Colonic mucosa (tissue), 4 donors: ENCODE measurements at regions of chr3 and their contacts with region 1.

Region 1: DNA sequence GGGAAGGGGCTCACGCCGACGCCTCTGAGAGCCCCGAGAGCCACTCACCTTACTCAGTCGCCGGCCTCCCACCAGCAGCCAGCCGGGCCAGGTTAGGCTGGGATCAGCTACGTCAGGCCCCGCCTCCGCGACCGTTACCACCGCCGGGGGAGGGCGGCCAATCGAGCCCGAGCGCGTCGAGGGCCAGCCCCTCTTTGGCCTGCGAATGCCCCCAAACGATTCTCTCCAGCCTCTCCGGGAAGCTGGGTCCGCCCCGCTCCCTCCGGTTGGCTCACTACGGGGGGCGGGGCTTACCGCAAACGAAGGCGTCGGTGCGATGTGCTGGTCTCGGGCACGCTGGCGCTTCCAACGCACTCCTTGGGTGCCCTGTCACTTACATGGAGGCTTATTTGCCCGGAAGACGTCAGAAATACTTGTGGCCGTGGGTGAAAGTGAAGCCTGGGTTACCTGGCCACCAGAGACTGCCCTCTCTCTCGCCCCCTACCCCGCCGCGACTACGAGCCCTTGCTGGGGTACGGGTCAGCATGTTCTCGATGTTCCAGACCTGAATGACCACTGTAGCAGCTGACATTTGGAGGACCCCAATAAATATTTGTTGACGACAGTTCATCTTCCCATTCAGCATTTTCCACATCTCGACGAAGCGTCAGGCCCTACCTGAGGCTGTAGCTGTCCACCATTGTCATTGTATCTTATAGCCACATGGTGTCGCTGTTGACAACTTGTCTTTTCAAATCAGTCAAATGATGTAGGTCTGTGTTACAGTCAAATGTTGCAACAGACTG is at the start of gene CEP70:
- DNase-seq: peak; percentile 96
- H3K4me3 ChIP-seq: peak within 1 kb of the TSS; percentile 64
- H3K27ac ChIP-seq: peak within 1 kb of the TSS; percentile 89
- H3K4me1 ChIP-seq: peaks cover 3% of the 10 kb centered on the region
- H3K27me3 ChIP-seq: no peaks in the 10 kb centered on the region
- CTCF ChIP-seq: peak; percentile 92
- total RNA-seq, gene CEP70: 31.6 to 45.4 TPM

Region 2: GRCh38 chr3:138694287-138695007 is 100.1 kb after region 1 on chr3:
- intact Hi-C with region 1: loop called (anchors 5 kb)
- DNase-seq: no peak
- H3K4me3 ChIP-seq: no peak overlapping the region
- H3K27ac ChIP-seq: no peak overlapping the region
- H3K4me1 ChIP-seq: no peaks in the 10 kb centered on the region
- H3K27me3 ChIP-seq: no peaks in the 10 kb centered on the region
- CTCF ChIP-seq: no peak

Region 3: DNA sequence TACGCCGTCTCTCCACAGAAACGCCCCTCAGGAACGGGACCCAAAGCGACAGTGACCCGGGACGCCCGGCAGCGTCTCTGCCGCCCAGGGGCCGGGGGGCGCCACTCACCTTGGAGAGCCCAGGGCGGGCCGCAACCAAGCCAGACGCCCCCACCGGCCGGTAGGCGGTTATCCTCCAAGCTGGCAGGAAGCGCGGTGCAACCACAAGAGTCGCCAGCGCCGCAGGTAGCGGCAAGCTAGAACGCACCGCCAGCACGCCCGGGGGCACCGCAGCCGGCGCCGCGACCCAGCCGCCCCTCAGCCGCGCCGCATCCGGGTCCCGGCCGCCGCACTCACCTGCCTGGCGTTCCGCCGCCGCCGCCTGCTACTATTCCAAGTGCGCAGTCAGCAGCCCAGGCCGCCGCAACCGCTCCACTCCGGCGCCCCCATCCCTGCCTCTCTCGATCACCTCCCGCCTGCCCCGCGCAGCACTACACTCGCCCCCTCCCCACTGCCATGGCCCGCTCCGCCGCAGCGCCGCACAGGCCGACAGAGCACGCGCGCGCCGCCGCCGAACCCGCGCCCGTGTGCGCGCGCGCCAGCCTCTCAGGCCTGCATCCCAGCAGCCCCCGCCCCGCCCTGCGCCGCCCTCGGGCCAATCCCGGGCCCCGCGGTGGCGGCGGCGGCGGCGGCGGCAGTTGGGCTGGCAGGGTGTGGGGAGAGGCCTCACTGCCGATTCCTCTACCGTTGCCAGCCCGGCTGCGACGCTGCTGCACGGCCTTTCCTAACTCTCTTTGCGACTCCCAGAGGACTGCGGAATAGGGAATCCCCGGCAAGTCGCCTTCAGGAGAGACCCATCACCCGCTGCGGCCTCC is 240.2 kb after region 1 on chr3 and contains the start of gene PIK3CB:
- intact Hi-C with region 1: loop called (anchors 10 kb)
- DNase-seq: peak; percentile 93
- H3K4me3 ChIP-seq: peak within 1 kb of the TSS; percentile 97
- H3K27ac ChIP-seq: peak within 1 kb of the TSS; percentile 93
- H3K4me1 ChIP-seq: no peaks in the 10 kb centered on the region
- H3K27me3 ChIP-seq: no peaks in the 10 kb centered on the region
- CTCF ChIP-seq: peak; percentile 21
- total RNA-seq, gene PIK3CB: 43.4 to 51.5 TPM

Region 4: DNA sequence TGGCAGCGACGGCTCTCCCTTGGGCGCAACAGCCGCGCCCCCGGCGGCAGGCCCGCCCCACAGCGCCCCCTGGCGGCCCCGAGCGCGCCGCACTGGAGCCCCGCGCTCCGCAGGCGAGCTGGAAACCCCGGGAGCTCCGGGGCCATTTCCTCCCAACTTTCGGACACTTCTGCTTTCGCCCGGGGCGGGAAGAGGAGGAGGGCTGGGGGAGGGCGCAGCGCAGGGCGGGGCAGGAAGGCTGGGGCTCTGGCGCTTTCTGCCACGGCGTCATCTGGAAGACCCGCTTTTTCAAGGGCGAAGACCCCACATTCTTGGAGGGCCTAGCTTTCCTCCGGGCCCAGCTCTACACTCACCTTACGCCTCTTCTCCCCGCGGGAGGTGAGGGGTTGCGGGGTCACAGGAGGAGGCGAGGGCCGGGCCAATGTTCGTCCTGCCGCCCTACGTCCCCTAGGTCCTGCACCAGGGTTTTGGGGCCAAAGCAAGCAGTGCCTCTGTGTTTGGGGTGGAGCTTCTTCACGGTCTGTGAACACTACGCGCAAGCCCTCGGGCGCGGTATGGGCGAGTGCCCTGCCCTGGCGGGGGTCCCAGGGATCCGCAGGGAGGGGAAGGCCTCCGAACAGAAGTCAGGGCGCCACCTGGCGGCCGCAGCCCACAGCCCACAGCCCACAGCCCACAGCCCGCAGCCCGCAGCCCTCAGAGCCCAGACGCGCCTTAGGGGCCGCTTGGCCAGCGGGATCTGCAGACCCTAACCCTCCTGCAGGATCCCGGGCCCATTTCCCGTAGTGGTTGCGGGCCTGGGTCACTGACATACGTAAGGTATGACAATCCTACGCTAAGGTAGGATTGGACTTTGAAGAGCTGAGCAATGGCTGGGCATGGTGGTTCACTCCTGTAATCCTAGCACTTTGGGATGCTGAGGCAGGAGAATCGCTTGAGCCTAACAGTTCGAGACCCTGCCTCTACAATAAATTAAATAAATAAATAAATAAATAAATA is 321.5 kb after region 1 on chr3:
- intact Hi-C with region 1: loop called (anchors 2 kb)
- DNase-seq: peak; percentile 95
- H3K4me3 ChIP-seq: peak overlapping the region; percentile 78
- H3K27ac ChIP-seq: peak overlapping the region; percentile 92
- H3K4me1 ChIP-seq: no peaks in the 10 kb centered on the region
- H3K27me3 ChIP-seq: no peaks in the 10 kb centered on the region
- CTCF ChIP-seq: peak; percentile 79

Region 5: DNA sequence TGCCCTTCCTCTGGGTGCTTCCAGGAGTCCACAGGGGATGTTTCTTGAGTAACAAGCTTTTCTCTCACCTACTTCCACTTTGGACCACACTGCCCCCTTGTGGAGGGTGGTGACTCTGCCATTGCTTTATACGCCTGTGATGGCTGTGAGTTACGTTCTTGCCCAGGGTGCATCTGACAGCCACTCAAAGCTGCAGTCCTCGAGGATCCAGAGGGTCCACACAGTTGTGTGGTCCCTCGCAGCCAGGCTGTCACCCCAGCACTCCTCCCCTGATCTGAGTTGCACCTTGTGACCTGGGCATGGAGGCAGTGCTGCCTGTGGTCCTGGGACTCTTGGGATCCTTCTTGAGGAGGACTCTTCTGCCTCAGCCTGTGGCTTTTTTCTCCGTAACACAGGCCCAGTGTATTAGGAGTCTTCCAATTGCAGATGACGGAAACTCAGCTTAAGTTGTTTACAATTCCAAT is 329.2 kb after region 1 on chr3:
- intact Hi-C with region 1: loop called (anchors 2 kb)
- DNase-seq: peak; percentile 92
- H3K4me3 ChIP-seq: no peak overlapping the region
- H3K27ac ChIP-seq: no peak overlapping the region
- H3K4me1 ChIP-seq: no peaks in the 10 kb centered on the region
- H3K27me3 ChIP-seq: no peaks in the 10 kb centered on the region
- CTCF ChIP-seq: peak; percentile 90